ENCODE measurements at regions of chr14 and their contacts with region 1.

Region 1: GRCh38 chr14:69346710-69347109 is 51.4 kb downstream of the ERH start:
- DNase-seq: no peak
- ATAC-seq: peak; percentile 76
- H3K4me3 ChIP-seq: no peak overlapping the region
- H3K27ac ChIP-seq: no peak overlapping the region
- H3K4me1 ChIP-seq: no peaks in the 10 kb centered on the region
- H3K27me3 ChIP-seq: no peaks in the 10 kb centered on the region
- CTCF ChIP-seq: peak; percentile 83

Region 2: GRCh38 chr14:69260861-69261564 is 85.7 kb before region 1 on chr14:
- CTCF ChIA-PET with region 1: no interaction called
- POLR2A ChIA-PET with region 1: no interaction called
- in situ Hi-C with region 1: no loop called
- intact Hi-C with region 1: loop called (anchors 10 kb)
- DNase-seq: no peak
- ATAC-seq: peak; percentile 72
- H3K4me3 ChIP-seq: peak overlapping the region; percentile 32 to 42; a peak in 3 of 4 replicates
- H3K27ac ChIP-seq: no peak overlapping the region
- H3K4me1 ChIP-seq: no peaks in the 10 kb centered on the region
- H3K27me3 ChIP-seq: peaks cover 6% of the 10 kb centered on the region; the same call in 1 of the 2 replicates
- CTCF ChIP-seq: peak; percentile 81

Region 3: GRCh38 chr14:69275331-69275730 is 71.4 kb before region 1 on chr14:
- CTCF ChIA-PET with region 1: no interaction called
- POLR2A ChIA-PET with region 1: no interaction called
- in situ Hi-C with region 1: no loop called
- intact Hi-C with region 1: no loop called
- DNase-seq: no peak
- ATAC-seq: no peak
- H3K4me3 ChIP-seq: no peak overlapping the region
- H3K27ac ChIP-seq: no peak overlapping the region
- H3K4me1 ChIP-seq: no peaks in the 10 kb centered on the region
- H3K27me3 ChIP-seq: no peaks in the 10 kb centered on the region
- CTCF ChIP-seq: no peak

Region 4: DNA sequence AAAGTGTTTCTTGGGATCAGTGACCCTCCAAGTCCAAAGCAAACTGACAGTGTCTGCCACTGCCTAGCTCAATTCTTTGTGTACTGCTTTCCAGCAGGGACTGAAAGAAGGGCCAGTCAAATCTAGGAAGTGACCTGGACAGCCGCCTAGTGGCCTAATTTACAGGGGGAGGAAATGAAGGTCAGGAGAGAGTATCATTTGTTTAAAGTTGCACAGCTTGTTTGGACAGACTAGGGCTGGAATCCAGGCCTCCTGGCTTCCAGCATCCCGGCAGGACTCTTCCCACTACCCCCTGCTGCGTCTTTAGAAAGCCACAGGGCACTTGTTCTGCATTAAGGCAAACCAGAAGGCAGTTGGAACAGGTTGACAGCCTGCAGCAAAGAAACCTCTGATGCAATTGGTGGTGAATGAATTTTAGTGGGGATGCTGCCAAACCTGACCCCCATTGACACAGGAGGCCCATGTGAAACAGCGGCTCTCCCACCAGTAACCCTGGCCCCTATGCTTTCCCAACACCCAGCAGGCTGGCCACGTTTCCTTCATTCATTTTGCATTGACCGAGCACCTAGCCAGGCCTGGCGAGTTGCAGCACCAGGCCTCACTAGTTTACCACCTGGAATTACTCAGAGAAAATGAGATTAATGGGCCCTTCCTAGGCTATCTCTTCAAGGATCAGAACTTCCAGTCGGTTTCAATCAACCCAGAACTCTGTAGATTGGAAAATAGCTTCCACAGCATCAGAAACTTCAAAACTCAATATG is 58.5 kb before region 1 on chr14:
- CTCF ChIA-PET with region 1: no interaction called
- POLR2A ChIA-PET with region 1: no interaction called
- in situ Hi-C with region 1: no loop called
- intact Hi-C with region 1: no loop called
- DNase-seq: no peak
- ATAC-seq: peak; percentile 69
- H3K4me3 ChIP-seq: no peak overlapping the region
- H3K27ac ChIP-seq: no peak overlapping the region
- H3K4me1 ChIP-seq: no peaks in the 10 kb centered on the region
- H3K27me3 ChIP-seq: no peaks in the 10 kb centered on the region
- CTCF ChIP-seq: peak; percentile 59

Region 5: GRCh38 chr14:69428289-69428998 is 81.7 kb after region 1 on chr14:
- CTCF ChIA-PET with region 1: no interaction called
- POLR2A ChIA-PET with region 1: no interaction called
- in situ Hi-C with region 1: no loop called
- intact Hi-C with region 1: no loop called
- DNase-seq: no peak
- ATAC-seq: no peak
- H3K4me3 ChIP-seq: no peak overlapping the region
- H3K27ac ChIP-seq: no peak overlapping the region
- H3K4me1 ChIP-seq: no peaks in the 10 kb centered on the region
- H3K27me3 ChIP-seq: no peaks in the 10 kb centered on the region
- CTCF ChIP-seq: no peak